Transverse colon (tissue), 4 donors: ENCODE measurements at regions of chr17 and their contacts with region 1.

Region 1: DNA sequence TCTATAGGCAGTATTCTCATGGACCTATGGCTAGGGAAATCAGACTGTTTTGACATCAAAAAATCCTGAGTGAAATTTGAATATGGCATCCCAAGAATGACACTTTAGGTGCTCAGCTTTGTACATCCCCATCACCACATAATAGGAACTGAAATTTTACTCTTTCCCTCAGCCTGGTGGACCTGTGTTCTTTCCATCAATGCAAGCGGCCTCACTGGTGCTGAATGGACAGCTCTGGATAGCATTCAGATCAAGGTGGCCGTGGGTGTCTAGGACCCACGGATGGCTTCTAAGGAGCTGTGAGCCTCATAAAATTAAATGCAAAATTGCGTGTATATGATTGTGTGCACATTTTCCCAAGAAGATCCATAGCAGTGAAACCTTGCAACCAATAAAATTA is 152.6 kb downstream of the MAP2K6 start:
- DNase-seq: no peak
- H3K4me3 ChIP-seq: no peak overlapping the region
- H3K27ac ChIP-seq: no peak overlapping the region
- H3K4me1 ChIP-seq: peaks cover 0 to 4% (median 0%) of the 10 kb centered on the region in 4 donors
- H3K27me3 ChIP-seq: no peaks in the 10 kb centered on the region
- CTCF ChIP-seq: no peak
- EP300 ChIP-seq: no peak
- POLR2A ChIP-seq: no peak

Region 2: GRCh38 chr17:69414408-69415274 is 152.5 kb before region 1 on chr17 and contains the start of gene MAP2K6:
- in situ Hi-C with region 1: no loop called
- intact Hi-C with region 1: no loop called
- DNase-seq: peak; percentile 89
- H3K4me3 ChIP-seq: peak within 1 kb of the TSS; percentile 16 to 65 (median 41)
- H3K27ac ChIP-seq: peak within 1 kb of the TSS; percentile 55 to 80 (median 73)
- H3K4me1 ChIP-seq: peaks cover 9 to 47% (median 25%) of the 10 kb centered on the region in 4 donors
- H3K27me3 ChIP-seq: no peaks in the 10 kb centered on the region
- CTCF ChIP-seq: no peak
- EP300 ChIP-seq: no peak
- POLR2A ChIP-seq: no peak
- total RNA-seq, gene MAP2K6: 16.1 to 50.7 (median 45.8) TPM

Region 3: DNA sequence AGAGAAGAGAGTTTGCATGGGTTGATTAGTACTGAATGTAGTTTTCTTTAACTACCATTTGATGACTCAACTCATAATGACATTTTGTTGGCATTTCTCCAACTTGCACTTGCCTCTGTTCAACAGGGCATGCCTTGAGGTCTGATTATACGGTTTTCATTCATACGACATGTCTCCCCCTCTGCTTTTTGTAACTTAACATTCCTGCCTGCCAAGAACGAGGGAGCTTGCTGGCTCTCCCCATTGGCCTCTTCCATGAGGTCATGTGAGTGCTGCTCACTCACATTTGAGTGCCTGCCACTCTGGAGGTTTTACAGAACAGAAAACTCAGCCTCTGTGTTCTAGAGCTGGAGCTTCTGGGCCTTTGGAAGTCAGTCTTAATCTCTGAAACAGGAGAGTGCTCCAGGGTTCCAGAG is 133.0 kb before region 1 on chr17:
- in situ Hi-C with region 1: no loop called
- intact Hi-C with region 1: no loop called
- DNase-seq: no peak
- H3K4me3 ChIP-seq: no peak overlapping the region
- H3K27ac ChIP-seq: peak overlapping the region in 2 of 4 donors; percentile 1 to 46
- H3K4me1 ChIP-seq: peaks cover 7 to 42% (median 14%) of the 10 kb centered on the region in 4 donors
- H3K27me3 ChIP-seq: no peaks in the 10 kb centered on the region
- CTCF ChIP-seq: no peak
- EP300 ChIP-seq: no peak
- POLR2A ChIP-seq: no peak

Region 4: DNA sequence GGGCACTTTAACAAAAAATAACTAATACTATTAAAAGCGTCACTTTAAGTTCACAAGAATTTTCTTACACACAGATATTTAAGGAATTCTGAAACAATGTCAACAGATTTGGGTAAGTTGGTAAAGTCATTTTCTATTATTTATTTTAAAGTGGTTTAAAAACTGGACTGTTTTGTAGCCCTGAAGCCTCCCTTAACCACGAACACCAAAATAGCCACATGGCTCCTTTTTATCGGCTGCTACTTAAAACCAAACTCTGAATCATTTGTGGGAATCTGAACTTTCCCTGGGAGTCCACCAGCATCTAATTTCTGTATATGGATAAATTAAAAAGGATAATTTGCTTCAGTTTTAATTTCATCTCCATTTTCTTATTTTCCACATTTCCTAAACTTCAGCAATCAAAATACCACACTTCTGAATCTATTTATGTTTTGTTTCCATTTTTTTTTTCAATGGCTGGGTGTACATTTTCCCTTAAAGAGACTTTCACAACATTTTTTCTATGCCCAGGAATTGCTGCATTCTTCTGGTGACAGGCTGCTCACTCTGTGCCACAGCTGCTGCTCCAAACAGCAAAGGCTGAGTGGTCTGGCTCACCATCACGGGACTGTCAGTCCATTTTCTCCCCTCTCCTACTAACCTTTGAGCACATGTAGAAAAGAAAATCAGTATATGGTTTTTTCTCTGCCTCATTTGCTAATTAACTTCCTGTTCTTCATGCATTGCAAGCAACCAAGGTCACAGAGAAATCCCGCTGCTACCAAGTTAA is 252.4 kb after region 1 on chr17:
- in situ Hi-C with region 1: no loop called
- intact Hi-C with region 1: loop called (anchors 10 kb)
- DNase-seq: no peak
- H3K4me3 ChIP-seq: no peak overlapping the region
- H3K27ac ChIP-seq: no peak overlapping the region
- H3K4me1 ChIP-seq: no peaks in the 10 kb centered on the region
- H3K27me3 ChIP-seq: no peaks in the 10 kb centered on the region
- CTCF ChIP-seq: no peak
- EP300 ChIP-seq: no peak
- POLR2A ChIP-seq: no peak